Endothelial cell of umbilical vein (primary cell): ENCODE measurements at regions of chr19 and their contacts with region 1.

Region 1: GRCh38 chr19:23249911-23250649 is at the start of gene ZNF724:
- DNase-seq: peak; percentile 94
- H3K4me3 ChIP-seq: peak within 1 kb of the TSS; percentile 67 to 90 (median 84)
- H3K27ac ChIP-seq: peak within 1 kb of the TSS; percentile 46
- H3K4me1 ChIP-seq: no peaks in the 10 kb centered on the region
- H3K27me3 ChIP-seq: no peaks in the 10 kb centered on the region
- CTCF ChIP-seq: no peak
- POLR2A ChIP-seq: no peak
- total RNA-seq, gene ZNF724: 5.0 and 6.0 TPM in 2 replicates

Region 2: DNA sequence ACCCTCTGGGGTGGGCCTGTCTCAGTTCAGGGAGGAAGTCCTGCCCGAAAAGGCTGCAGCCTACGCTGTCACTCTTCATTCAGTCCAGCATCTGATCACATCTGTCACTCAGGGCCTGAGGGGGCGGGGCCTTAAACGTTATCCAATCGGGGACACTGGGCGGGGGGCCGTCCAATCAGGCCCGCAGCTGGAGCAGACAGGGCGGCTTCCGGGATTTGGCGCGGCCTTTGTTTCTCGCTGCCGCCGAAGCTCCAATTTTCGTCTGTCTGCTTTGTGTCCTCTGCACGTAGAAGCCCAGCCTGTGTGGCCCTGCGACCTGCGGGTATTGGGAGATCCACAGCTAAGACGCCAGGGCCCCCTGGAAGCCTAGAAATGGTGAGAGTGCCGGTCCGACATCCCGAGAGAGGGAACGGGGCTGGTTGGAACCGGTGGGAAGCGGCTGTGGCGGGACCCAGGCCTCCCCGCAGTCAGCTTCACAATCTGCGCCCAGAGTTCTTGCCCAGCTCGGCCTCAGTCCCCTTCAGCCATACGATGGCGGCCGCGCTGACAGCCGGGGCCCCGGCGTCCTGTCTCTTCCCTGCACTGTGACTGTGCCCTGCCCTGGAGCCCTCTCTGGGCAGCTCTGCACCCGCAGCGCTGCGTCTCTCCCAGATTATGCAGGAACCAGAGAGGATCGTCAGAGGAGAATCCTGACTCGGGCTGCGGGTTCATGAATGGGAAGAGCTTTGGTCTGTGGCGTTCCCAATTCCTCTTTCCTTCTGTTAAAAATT is 133.1 kb before region 1 on chr19 and contains the start of gene ZNF730:
- CTCF ChIA-PET with region 1: no interaction called
- POLR2A ChIA-PET with region 1: interaction called, 7 read pairs
- dilution Hi-C with region 1: no loop called
- intact Hi-C with region 1: loop called (anchors 5 kb)
- DNase-seq: peak; percentile 36
- H3K4me3 ChIP-seq: peak within 1 kb of the TSS in 2 of 3 experiments; percentile 56 to 74
- H3K27ac ChIP-seq: no peak within 1 kb of the TSS
- H3K4me1 ChIP-seq: no peaks in the 10 kb centered on the region
- H3K27me3 ChIP-seq: no peaks in the 10 kb centered on the region
- CTCF ChIP-seq: no peak
- POLR2A ChIP-seq: no peak
- total RNA-seq, gene ZNF730: 3.0 and 4.2 TPM in 2 replicates

Region 3: GRCh38 chr19:23203841-23204344 is 46.2 kb before region 1 on chr19:
- CTCF ChIA-PET with region 1: no interaction called
- POLR2A ChIA-PET with region 1: no interaction called
- dilution Hi-C with region 1: no loop called
- intact Hi-C with region 1: no loop called
- DNase-seq: no peak
- H3K4me3 ChIP-seq: no peak overlapping the region
- H3K27ac ChIP-seq: no peak overlapping the region
- H3K4me1 ChIP-seq: no peaks in the 10 kb centered on the region
- H3K27me3 ChIP-seq: no peaks in the 10 kb centered on the region
- CTCF ChIP-seq: no peak
- POLR2A ChIP-seq: no peak

Region 4: DNA sequence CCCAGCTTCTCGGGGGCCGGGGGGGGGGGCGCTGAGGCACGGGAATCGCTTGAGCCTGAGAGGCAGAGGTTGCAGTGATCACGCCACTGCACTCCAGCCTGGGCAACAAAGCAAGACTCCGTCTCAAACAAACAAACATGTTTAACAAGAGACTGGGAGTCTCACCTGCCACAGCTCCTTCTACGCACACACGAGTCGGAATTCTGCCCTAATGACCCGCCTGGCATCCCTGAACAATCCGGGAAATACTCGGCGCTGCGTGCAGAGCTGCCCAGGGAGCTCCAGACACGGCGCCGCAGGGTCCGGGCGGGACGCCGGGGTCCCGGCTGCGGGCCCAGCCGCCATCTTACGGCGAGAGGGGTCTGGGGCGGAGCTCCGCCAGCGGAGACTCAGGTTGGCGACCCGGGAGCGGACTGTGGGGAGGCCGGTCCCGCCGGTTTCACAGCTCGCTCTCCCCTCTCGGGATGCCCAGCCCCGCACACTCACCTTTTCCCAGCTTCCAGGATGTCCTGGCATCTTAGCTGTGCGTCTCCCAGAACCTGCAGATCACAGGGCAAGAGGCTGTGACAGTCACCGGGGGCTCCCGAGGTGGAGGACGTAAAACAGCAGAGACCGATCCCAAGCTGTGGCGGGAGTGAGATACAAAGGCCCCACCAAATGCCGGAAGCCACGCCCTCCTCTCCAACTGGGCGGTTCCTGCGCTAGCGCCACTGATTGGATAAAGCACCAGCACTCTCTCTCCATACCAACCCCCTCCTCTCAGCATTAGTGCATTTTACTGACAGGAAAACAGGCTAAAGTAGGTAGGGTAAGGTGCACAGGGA is 23.7 kb after region 1 on chr19:
- CTCF ChIA-PET with region 1: no interaction called
- POLR2A ChIA-PET with region 1: interaction called, 7 read pairs
- dilution Hi-C with region 1: no loop called
- intact Hi-C with region 1: loop called (anchors 1 kb)
- DNase-seq: peak; percentile 85
- H3K4me3 ChIP-seq: peak overlapping the region; percentile 36 to 88 (median 72)
- H3K27ac ChIP-seq: peak overlapping the region; percentile 25
- H3K4me1 ChIP-seq: peaks cover 4% of the 10 kb centered on the region
- H3K27me3 ChIP-seq: no peaks in the 10 kb centered on the region
- CTCF ChIP-seq: no peak
- POLR2A ChIP-seq: peak; percentile 48

Region 5: DNA sequence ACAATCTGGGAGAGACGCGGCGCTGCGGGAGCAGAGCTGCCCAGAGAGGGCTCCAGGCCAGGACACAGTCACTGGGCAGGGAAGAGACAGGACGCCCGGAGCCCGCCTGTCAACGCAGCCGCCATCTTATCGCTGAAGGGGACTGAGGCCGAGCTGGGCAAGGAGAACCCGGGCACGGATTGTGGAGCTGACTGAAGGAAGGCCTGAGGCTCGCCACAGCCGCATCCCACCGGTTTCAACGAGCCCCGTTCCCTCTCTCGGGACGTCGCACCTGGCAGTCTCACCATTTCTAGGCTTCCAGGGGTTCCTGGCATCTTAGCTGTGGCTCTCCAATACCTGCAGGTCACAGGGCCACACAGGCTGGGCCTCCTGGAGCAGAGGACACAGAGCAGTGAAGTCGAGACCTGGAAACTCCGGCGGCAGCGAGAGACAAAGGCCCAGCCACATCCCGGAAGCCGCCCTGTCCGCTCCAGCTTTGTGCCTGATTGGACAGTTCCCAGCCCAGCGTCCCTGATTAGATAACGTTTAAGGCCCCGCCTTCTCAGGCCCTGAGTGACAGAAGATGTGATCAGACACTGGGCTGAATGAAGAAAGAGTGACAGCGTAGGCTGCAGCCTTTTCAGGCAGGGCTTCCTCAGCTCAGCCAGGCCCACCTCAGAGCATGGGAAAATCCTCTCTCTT is 145.1 kb after region 1 on chr19 and contains the start of gene ZNF91:
- CTCF ChIA-PET with region 1: no interaction called
- POLR2A ChIA-PET with region 1: no interaction called
- dilution Hi-C with region 1: no loop called
- intact Hi-C with region 1: loop called (anchors 1 kb)
- DNase-seq: peak; percentile 95
- H3K4me3 ChIP-seq: peak within 1 kb of the TSS; percentile 60 to 97 (median 97)
- H3K27ac ChIP-seq: peak within 1 kb of the TSS; percentile 99
- H3K4me1 ChIP-seq: no peaks in the 10 kb centered on the region
- H3K27me3 ChIP-seq: no peaks in the 10 kb centered on the region
- CTCF ChIP-seq: no peak
- POLR2A ChIP-seq: peak; percentile 83
- total RNA-seq, gene ZNF91: 12.4 and 17.0 TPM in 2 replicates